ENCODE measurements at regions of chr1 and their contacts with region 1.

Region 1: GRCh38 chr1:100265931-100266740 is at the start of gene RTCA:
- DNase-seq: peak; percentile 97 to 99 (median 98)
- H3K4me3 ChIP-seq: peak within 1 kb of the TSS; percentile 68 to 96 (median 92)
- H3K27ac ChIP-seq: peak within 1 kb of the TSS; percentile 81 to 93
- H3K4me1 ChIP-seq: peaks cover 12 to 24% (median 14%) of the 10 kb centered on the region in 4 experiments
- H3K27me3 ChIP-seq: no peaks in the 10 kb centered on the region

Region 2: GRCh38 chr1:99975529-99975928 is 290.6 kb before region 1 on chr1:
- CTCF ChIA-PET with region 1: no interaction called
- POLR2A ChIA-PET with region 1: no interaction called
- DNase-seq: no peak
- H3K4me3 ChIP-seq: no peak overlapping the region
- H3K27ac ChIP-seq: no peak overlapping the region
- H3K4me1 ChIP-seq: peaks cover 5 to 6% (median 6%) of the 10 kb centered on the region in 4 experiments
- H3K27me3 ChIP-seq: no peaks in the 10 kb centered on the region

Region 3: GRCh38 chr1:100100202-100100601 is 165.9 kb before region 1 on chr1:
- CTCF ChIA-PET with region 1: no interaction called
- POLR2A ChIA-PET with region 1: no interaction called
- DNase-seq: peak in 1 of 3 donors; percentile 46
- H3K4me3 ChIP-seq: no peak overlapping the region
- H3K27ac ChIP-seq: no peak overlapping the region
- H3K4me1 ChIP-seq: no peaks in the 10 kb centered on the region
- H3K27me3 ChIP-seq: no peaks in the 10 kb centered on the region

Region 4: DNA sequence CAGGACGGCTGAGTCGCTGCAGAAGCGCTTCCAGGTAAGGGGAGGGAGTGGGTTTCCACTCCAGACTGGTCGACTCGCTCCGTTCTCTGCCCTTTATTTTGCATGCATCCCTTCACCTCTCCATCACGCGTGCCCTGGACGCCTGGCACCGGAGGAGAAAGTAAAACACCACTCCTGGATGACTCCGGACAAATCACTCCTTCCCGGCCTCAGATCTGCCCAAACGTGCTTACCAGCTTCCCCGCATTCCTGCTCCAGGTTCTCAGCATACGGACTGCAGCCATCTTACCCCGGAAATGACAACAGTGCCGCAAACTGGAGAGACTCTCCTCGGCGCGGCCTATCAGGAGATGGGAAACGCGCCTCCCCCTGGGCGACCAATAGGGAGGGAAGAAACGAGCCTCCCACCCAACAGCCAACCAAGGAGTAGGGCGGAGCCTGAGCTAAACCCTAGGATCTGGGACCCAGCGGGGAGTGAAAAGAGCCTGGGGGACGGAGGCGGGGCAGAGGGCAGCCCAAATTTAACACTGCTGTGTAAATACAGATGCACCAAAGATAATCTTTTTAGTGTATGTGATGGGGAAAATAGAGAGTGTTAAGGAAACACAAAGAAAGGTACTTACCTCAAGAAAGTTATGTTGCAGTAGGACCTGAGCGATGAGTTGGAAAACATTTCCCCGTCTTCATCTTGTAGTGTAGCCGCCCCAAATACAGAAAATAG is 16.4 kb before region 1 on chr1 and contains the start of gene DBT:
- CTCF ChIA-PET with region 1: interaction called, 8 read pairs
- POLR2A ChIA-PET with region 1: interaction called, 10 read pairs
- DNase-seq: peak; percentile 94 to 97 (median 96)
- H3K4me3 ChIP-seq: peak within 1 kb of the TSS; percentile 77 to 100 (median 98)
- H3K27ac ChIP-seq: peak within 1 kb of the TSS; percentile 77 to 92
- H3K4me1 ChIP-seq: peaks cover 2 to 18% (median 11%) of the 10 kb centered on the region in 4 experiments
- H3K27me3 ChIP-seq: no peaks in the 10 kb centered on the region

Measured in common myeloid progenitor, CD34-positive (primary cell).